ENCODE measurements at regions of chr10 and their contacts with region 1.

Region 1: GRCh38 chr10:125060826-125061556 is 99.4 kb downstream of the CTBP2 start:
- DNase-seq: peak; percentile 72
- H3K4me3 ChIP-seq: no peak overlapping the region
- H3K27ac ChIP-seq: peak overlapping the region; percentile 33
- H3K4me1 ChIP-seq: peaks cover 70% of the 10 kb centered on the region
- H3K27me3 ChIP-seq: no peaks in the 10 kb centered on the region
- CTCF ChIP-seq: peak; percentile 89 to 91

Region 2: GRCh38 chr10:124916585-124917427 is 144.2 kb before region 1 on chr10:
- CTCF ChIA-PET with region 1: no interaction called
- dilution Hi-C with region 1: no loop called
- in situ Hi-C with region 1: no loop called
- intact Hi-C with region 1: loop called (anchors 5 kb)
- DNase-seq: peak; percentile 94
- H3K4me3 ChIP-seq: peak overlapping the region; percentile 66 to 95 (median 87)
- H3K27ac ChIP-seq: peak overlapping the region; percentile 91
- H3K4me1 ChIP-seq: peaks cover 25% of the 10 kb centered on the region
- H3K27me3 ChIP-seq: no peaks in the 10 kb centered on the region
- CTCF ChIP-seq: peak in 1 of 2 donors; percentile 5

Region 3: DNA sequence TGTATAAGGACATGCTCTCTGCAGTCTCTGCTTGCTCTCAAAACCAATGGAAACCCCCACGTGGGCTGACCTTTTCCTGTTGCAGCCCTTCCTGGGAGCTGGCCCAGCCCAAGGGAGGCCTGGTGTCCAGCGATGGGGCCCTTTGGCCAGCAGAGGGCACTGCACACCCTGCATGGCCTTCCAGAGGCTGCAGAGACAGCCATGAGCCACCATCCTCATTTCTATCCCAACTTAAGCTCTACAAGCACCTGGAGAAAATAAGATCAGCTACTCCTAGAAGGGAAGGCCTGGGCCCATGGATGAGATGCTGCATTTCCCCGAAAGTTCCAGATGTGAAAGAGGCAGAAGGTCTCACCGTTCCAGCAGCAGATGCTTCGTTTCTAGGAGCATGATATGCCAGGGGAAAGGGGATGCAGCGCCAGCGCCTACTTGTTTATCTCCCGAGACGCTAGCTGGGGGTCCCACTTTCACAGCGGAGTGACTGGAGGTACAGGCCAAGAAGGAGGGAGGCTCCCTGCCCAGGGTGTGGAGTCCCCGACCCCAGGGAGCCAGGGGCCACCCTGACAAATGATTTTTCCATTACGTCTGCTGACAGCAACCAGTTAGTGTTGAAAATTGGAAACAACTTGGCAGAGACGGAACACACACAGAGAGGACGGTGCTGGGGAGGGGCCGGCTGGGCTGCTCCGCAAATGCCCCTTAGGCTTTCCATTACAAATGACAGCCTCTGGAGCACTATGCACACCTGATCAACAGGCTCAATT is 12.7 kb before region 1 on chr10:
- CTCF ChIA-PET with region 1: interaction called, 8 read pairs
- dilution Hi-C with region 1: no loop called
- in situ Hi-C with region 1: no loop called
- intact Hi-C with region 1: loop called (anchors 1 kb)
- DNase-seq: peak; percentile 74
- H3K4me3 ChIP-seq: no peak overlapping the region
- H3K27ac ChIP-seq: peak overlapping the region; percentile 45
- H3K4me1 ChIP-seq: peaks cover 34% of the 10 kb centered on the region
- H3K27me3 ChIP-seq: no peaks in the 10 kb centered on the region
- CTCF ChIP-seq: peak; percentile 96

Region 4: DNA sequence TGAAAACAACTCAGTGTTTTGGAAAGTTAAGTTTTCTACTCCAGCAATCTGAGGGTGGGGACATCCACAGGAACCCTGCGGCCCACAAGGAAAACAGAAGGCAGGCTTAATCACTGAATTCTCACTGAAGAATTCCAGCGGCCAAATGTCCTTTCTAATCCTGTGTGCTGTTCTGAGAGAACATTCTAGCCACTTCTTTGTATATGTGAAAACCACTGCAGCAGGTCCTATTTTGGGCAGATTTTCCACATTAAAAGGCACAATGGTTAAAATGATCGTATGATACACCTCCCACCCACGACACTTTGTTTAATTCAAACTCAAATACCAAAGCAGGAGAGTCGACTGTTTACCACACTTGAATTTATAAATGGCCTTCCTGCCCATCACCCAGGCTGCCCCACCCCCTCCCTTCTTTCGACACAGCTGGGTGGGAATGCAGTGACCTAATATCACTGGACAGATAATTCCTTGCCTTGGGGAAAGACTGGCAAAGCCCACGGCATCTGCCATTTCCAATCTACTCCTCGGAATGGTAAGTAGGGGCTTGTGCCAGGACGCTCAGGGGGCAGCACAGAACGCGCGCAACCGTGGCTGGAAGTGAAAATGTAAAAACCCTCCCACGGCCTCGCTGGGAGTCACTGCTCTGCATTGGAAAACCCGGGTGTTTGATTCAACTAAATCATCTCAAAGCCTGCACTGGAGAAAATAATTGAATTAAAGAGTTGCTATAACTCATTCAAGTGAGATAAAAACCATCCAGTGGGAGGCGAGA is 32.4 kb after region 1 on chr10:
- CTCF ChIA-PET with region 1: no interaction called
- dilution Hi-C with region 1: no loop called
- in situ Hi-C with region 1: no loop called
- intact Hi-C with region 1: no loop called
- DNase-seq: no peak
- H3K4me3 ChIP-seq: no peak overlapping the region
- H3K27ac ChIP-seq: no peak overlapping the region
- H3K4me1 ChIP-seq: peaks cover 23% of the 10 kb centered on the region
- H3K27me3 ChIP-seq: no peaks in the 10 kb centered on the region
- CTCF ChIP-seq: no peak

Region 5: GRCh38 chr10:125123476-125124114 is 62.6 kb after region 1 on chr10:
- CTCF ChIA-PET with region 1: no interaction called
- dilution Hi-C with region 1: loop called (anchors 5 kb)
- in situ Hi-C with region 1: no loop called
- intact Hi-C with region 1: no loop called
- DNase-seq: peak; percentile 100
- H3K4me3 ChIP-seq: peak overlapping the region in 2 of 3 experiments; percentile 13 to 14
- H3K27ac ChIP-seq: peak overlapping the region; percentile 98
- H3K4me1 ChIP-seq: peaks cover 71% of the 10 kb centered on the region
- H3K27me3 ChIP-seq: no peaks in the 10 kb centered on the region
- CTCF ChIP-seq: peak in 1 of 2 donors; percentile 1

Region 6: DNA sequence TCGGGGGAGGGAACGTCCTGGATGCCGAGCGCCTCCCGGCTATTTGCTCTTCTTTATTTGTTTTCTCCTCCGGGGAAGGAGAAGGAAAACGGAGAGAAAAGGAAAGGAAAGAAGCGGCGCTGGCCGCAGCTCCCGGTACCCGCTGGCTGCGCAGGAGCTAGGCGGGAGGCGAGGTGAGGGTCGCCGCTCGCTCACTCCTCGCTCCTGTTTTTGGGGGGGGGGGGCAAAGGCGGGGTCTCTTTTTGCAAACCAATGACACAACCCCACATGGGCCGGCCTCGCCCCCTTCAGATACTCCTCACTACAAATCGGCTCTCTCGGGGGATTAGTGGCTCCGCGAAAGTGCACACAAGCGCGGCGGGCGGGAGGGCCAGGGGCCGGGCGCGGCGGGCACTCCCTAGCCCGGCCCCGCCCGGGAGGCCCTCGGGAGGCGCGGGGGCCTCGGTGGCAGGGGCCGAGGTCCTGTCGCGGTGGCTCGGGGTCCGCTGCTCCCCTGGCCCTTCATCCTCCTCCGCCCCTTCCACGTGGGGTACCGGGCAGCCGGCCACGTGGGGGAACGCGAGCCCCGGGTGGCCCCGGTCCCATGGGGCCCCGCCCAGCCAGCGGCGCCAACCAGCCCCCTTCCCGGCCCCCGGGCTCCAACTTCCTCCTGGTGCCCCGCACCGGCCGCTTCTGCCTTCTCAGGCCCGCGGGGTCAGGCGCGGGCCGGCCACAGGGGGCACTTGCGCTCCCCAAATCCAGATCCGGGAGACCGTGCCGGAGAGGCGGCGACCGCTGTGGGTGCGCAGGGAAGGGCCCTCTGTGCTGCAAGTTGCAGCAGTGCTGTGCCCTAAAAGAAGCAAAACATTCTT is 100.1 kb after region 1 on chr10:
- CTCF ChIA-PET with region 1: no interaction called
- dilution Hi-C with region 1: no loop called
- in situ Hi-C with region 1: no loop called
- intact Hi-C with region 1: no loop called
- DNase-seq: peak; percentile 80
- H3K4me3 ChIP-seq: peak overlapping the region; percentile 64 to 86 (median 70)
- H3K27ac ChIP-seq: peak overlapping the region; percentile 80
- H3K4me1 ChIP-seq: peaks cover 20% of the 10 kb centered on the region
- H3K27me3 ChIP-seq: no peaks in the 10 kb centered on the region
- CTCF ChIP-seq: peak; percentile 16 to 64

Region 7: GRCh38 chr10:125263555-125263954 is 202.6 kb after region 1 on chr10:
- CTCF ChIA-PET with region 1: no interaction called
- dilution Hi-C with region 1: no loop called
- in situ Hi-C with region 1: no loop called
- intact Hi-C with region 1: loop called (anchors 10 kb)
- DNase-seq: peak; percentile 86
- H3K4me3 ChIP-seq: no peak overlapping the region
- H3K27ac ChIP-seq: peak overlapping the region; percentile 55
- H3K4me1 ChIP-seq: peaks cover 38% of the 10 kb centered on the region
- H3K27me3 ChIP-seq: no peaks in the 10 kb centered on the region
- CTCF ChIP-seq: no peak